ENCODE measurements at regions of chr2 and their contacts with region 1.

Region 1: GRCh38 chr2:79935771-79936657 is 368.5 kb downstream of the LRRTM1 start:
- DNase-seq: peak; percentile 67
- ATAC-seq: peak; percentile 98
- H3K4me3 ChIP-seq: no peak overlapping the region
- H3K27ac ChIP-seq: no peak overlapping the region
- H3K4me1 ChIP-seq: peaks cover 4% of the 10 kb centered on the region; the same call in 1 of the 2 replicates
- H3K27me3 ChIP-seq: no peaks in the 10 kb centered on the region
- CTCF ChIP-seq: peak; percentile 73
- EP300 ChIP-seq: no peak
- POLR2A ChIP-seq: no peak
- RAD21 ChIP-seq: no peak

Region 2: GRCh38 chr2:79982445-79982844 is 46.4 kb after region 1 on chr2:
- CTCF ChIA-PET with region 1: no interaction called
- POLR2A ChIA-PET with region 1: no interaction called
- in situ Hi-C with region 1: no loop called
- intact Hi-C with region 1: loop called (anchors 1 kb)
- DNase-seq: peak; percentile 18
- ATAC-seq: peak; percentile 85
- H3K4me3 ChIP-seq: no peak overlapping the region
- H3K27ac ChIP-seq: no peak overlapping the region
- H3K4me1 ChIP-seq: no peaks in the 10 kb centered on the region
- H3K27me3 ChIP-seq: no peaks in the 10 kb centered on the region
- CTCF ChIP-seq: peak; percentile 56
- EP300 ChIP-seq: no peak
- POLR2A ChIP-seq: no peak
- RAD21 ChIP-seq: no peak

Measured in HepG2 (cell line).